Activated naive CD4-positive, alpha-beta T cell treated with anti-CD3 and anti-CD28 coated beads for 36 hours (primary cell): ENCODE measurements at regions of chr14 and their contacts with region 1.

Region 1: DNA sequence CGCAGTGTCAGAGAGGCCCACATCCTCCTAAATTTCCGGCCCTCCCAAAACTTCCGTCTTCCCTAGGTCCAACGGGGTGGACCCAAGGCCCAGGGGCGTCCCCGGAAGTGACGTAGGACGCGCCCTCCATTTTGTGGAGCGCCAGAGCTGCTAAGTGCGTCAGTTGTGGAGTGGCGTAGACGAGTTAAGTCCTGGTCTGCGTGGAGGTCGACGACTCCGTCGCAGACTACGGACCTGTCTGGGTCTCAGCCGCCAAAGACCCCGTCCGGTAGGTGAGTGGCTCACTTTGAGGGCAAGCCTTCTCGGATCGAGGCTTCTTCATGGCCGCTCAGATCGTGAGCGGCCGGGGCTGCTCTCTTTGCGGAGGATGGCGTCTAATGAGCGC is at the start of gene SRSF5:
- DNase-seq: peak; percentile 95
- H3K4me3 Mint-ChIP-seq: peak within 1 kb of the TSS; percentile 97
- H3K27ac Mint-ChIP-seq: peak within 1 kb of the TSS; percentile 100
- H3K4me1 Mint-ChIP-seq: peaks cover 75% of the 10 kb centered on the region
- H3K27me3 Mint-ChIP-seq: no peaks in the 10 kb centered on the region
- total RNA-seq, gene SRSF5: 296 to 297 TPM

Region 2: GRCh38 chr14:69153131-69153872 is 613.7 kb before region 1 on chr14:
- CTCF ChIA-PET with region 1: no interaction called
- intact Hi-C with region 1: loop called (anchors 2 kb)
- DNase-seq: peak; percentile 95
- H3K4me3 Mint-ChIP-seq: peak overlapping the region; percentile 82
- H3K27ac Mint-ChIP-seq: peak overlapping the region; percentile 24
- H3K4me1 Mint-ChIP-seq: peaks cover 31% of the 10 kb centered on the region
- H3K27me3 Mint-ChIP-seq: no peaks in the 10 kb centered on the region

Region 3: DNA sequence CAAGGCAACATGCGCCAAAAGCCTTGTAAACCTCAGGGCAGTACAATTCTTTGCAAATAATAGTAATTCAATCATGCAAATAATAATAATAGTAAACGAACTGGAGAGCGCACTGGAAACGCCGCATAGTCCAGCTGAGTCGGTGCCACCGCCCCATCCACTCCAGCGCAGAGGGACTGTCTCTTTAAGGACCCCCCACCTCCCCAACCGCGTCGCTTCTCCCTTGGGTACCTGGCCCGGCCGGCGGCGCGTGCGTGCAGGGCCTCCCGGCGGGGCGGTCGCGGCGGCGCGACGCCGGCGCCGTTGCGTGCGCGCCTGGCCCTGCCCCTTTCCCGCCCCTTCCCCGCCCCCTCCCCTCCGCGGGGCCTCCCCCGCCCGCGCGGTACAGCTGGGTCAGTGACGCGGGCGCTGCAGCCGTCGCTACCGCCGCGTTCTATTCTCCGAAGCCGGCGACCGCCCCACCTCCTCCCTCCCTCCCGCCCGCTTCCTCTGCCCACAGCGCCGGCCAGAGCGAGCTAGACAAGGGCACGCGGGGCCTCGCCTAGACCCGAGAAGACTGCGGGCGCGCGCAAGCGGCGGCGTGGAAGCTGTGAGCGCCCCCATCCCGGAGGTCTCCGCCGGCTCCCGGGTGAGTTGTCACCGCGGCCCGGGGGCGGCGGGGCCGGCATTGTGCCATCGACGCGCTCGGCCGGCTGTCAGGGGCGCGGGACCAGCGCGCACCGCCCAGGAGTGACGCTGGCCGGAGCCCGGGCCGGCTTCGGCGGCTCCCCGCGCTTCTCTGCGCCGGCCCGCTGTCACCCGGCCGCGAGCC is 155.6 kb before region 1 on chr14 and contains the start of gene SUSD6:
- CTCF ChIA-PET with region 1: no interaction called
- intact Hi-C with region 1: loop called (anchors 1 kb)
- DNase-seq: peak; percentile 88
- H3K4me3 Mint-ChIP-seq: peak within 1 kb of the TSS; percentile 92
- H3K27ac Mint-ChIP-seq: peak within 1 kb of the TSS; percentile 91
- H3K4me1 Mint-ChIP-seq: peaks cover 53% of the 10 kb centered on the region
- H3K27me3 Mint-ChIP-seq: no peaks in the 10 kb centered on the region
- total RNA-seq, gene SUSD6: 66.6 to 69.7 TPM

Region 4: GRCh38 chr14:69673578-69674305 is 93.2 kb before region 1 on chr14:
- CTCF ChIA-PET with region 1: no interaction called
- intact Hi-C with region 1: loop called (anchors 1 kb)
- DNase-seq: peak; percentile 37
- H3K4me3 Mint-ChIP-seq: peak overlapping the region; percentile 49
- H3K27ac Mint-ChIP-seq: peak overlapping the region; percentile 99
- H3K4me1 Mint-ChIP-seq: peaks cover 94% of the 10 kb centered on the region
- H3K27me3 Mint-ChIP-seq: no peaks in the 10 kb centered on the region

Region 5: GRCh38 chr14:69726761-69727511 is 40.0 kb before region 1 on chr14:
- CTCF ChIA-PET with region 1: interaction called, 3 read pairs
- intact Hi-C with region 1: loop called (anchors 1 kb)
- DNase-seq: peak; percentile 82
- H3K4me3 Mint-ChIP-seq: peak overlapping the region; percentile 38
- H3K27ac Mint-ChIP-seq: no peak overlapping the region
- H3K4me1 Mint-ChIP-seq: peaks cover 12% of the 10 kb centered on the region
- H3K27me3 Mint-ChIP-seq: peaks cover 4% of the 10 kb centered on the region

Region 6: GRCh38 chr14:70655110-70655826 is 888.3 kb after region 1 on chr14:
- CTCF ChIA-PET with region 1: no interaction called
- intact Hi-C with region 1: loop called (anchors 5 kb)
- DNase-seq: peak; percentile 92
- H3K4me3 Mint-ChIP-seq: peak overlapping the region; percentile 83
- H3K27ac Mint-ChIP-seq: peak overlapping the region; percentile 98
- H3K4me1 Mint-ChIP-seq: peaks cover 81% of the 10 kb centered on the region
- H3K27me3 Mint-ChIP-seq: no peaks in the 10 kb centered on the region